AG04450 (cell line): ENCODE measurements at regions of chr2 and their contacts with region 1.

Region 1: GRCh38 chr2:25851740-25852503 is 26.4 kb downstream of the ASXL2 start:
- DNase-seq: peak; percentile 65
- H3K4me3 ChIP-seq: peak overlapping the region; percentile 13; the same call in 1 of the 2 replicates
- H3K27ac ChIP-seq: peak overlapping the region; percentile 70
- H3K27me3 ChIP-seq: no peaks in the 10 kb centered on the region
- CTCF ChIP-seq: peak; percentile 62

Region 2: DNA sequence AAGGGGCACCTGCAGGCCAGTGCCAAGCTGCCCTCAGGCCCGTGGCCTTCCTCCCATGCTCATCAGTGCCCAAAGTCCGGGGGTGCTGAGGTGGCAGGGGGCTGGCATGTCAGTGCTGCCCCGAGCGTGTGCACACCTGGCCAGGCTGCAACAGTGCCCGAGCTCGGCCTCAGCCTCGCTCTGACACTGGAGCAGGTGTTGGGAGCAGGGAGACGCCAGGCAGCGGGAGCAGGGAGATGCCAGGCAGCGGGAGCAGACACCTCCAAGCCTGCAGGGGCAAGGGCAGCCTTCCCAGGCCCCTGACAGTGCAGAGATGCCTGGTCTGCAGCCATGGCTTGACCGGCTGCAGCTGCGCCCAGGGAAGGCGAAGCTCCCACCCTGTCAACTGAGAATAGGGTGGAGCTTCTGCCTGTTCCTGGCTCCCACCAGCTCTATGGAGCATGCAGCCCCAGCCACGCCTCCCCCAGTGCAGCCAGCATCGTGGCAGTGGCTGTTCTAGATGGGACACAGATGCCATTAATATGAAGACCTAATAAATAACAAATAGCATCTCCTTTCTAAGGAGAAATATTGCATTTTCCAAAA is 260.9 kb before region 1 on chr2:
- CTCF ChIA-PET with region 1: no interaction called
- POLR2A ChIA-PET with region 1: no interaction called
- DNase-seq: no peak
- H3K4me3 ChIP-seq: no peak overlapping the region
- H3K27ac ChIP-seq: no peak overlapping the region
- H3K27me3 ChIP-seq: no peaks in the 10 kb centered on the region
- CTCF ChIP-seq: no peak

Region 3: GRCh38 chr2:25825238-25825637 is 26.7 kb before region 1 on chr2:
- CTCF ChIA-PET with region 1: interaction called, 17 read pairs
- POLR2A ChIA-PET with region 1: no interaction called
- DNase-seq: no peak
- H3K4me3 ChIP-seq: no peak overlapping the region
- H3K27ac ChIP-seq: no peak overlapping the region
- H3K27me3 ChIP-seq: no peaks in the 10 kb centered on the region
- CTCF ChIP-seq: no peak

Region 4: DNA sequence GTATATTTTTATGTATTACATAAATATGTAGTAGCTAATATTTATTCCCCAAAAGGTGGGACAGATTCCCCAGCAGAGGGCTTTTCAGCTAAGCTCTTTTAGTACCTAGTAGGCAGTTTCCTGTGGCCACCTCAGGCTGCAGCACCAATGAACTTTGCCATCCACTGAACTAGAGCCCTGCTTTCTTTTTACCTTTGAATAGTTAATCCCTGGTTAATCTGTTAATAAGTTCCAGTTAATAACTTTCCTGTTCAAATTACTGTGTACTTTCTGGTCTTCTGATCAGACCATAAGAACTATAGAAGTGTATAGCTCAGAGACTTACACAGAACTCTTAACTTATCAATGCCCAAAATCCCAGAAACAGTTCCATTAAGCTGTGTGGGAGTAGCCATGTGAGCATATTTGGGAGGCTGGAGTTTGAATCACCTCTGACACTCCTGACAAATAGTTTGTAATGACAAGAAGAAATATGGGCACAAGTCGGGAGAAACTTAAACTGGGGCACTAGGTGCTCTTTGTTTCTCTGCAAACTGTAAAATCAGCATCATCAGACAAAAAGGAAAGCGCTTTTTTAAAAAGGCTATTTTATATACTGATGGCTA is 13.7 kb before region 1 on chr2:
- CTCF ChIA-PET with region 1: interaction called, 21 read pairs
- POLR2A ChIA-PET with region 1: no interaction called
- DNase-seq: no peak
- H3K4me3 ChIP-seq: no peak overlapping the region
- H3K27ac ChIP-seq: no peak overlapping the region
- H3K27me3 ChIP-seq: no peaks in the 10 kb centered on the region
- CTCF ChIP-seq: no peak

Region 5: DNA sequence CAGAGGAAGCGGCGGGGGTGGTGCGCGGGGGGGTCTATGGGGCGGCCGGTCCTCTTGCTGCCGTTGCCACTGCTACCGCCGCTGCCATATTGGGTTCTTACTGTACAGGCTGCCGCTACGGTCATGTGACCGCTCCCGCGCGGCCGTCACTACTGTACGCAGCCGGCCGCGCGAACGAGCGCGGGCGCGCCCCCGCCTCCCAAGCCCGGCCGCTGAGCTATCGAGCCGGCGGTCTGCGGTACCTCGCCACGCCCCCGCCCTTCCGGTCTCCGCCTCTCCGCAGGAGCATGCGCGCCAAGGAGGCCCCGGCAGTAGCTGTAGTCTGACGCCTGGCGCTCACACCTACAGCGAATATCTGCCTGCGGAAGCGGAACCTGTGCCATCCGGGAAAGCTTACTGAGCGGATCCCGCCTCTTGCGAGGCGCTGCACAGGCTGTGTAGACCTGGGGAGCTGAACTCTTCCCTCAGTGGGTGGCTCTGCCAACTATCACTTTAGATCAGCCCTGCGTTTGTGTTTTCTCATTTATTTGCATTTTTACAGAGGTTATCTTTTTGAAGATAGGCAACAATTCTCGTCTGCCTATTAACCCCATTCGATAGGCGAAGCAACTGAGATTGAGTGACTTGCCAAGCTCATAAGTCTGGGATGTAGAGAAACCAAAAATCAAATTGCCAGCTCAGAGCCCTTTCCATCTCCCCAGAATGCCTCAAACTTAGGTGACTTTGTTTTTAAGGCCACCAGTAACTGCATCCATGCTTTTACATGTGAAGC is 26.6 kb after region 1 on chr2 and contains the start of gene ASXL2:
- CTCF ChIA-PET with region 1: interaction called, 19 read pairs
- POLR2A ChIA-PET with region 1: interaction called, 9 read pairs
- DNase-seq: peak; percentile 89
- H3K4me3 ChIP-seq: peak within 1 kb of the TSS; percentile 99
- H3K27ac ChIP-seq: peak within 1 kb of the TSS; percentile 94
- H3K27me3 ChIP-seq: no peaks in the 10 kb centered on the region
- CTCF ChIP-seq: no peak
- polyA plus RNA-seq, gene ASXL2: 12.5 and 14.0 TPM in 2 replicates

Region 6: DNA sequence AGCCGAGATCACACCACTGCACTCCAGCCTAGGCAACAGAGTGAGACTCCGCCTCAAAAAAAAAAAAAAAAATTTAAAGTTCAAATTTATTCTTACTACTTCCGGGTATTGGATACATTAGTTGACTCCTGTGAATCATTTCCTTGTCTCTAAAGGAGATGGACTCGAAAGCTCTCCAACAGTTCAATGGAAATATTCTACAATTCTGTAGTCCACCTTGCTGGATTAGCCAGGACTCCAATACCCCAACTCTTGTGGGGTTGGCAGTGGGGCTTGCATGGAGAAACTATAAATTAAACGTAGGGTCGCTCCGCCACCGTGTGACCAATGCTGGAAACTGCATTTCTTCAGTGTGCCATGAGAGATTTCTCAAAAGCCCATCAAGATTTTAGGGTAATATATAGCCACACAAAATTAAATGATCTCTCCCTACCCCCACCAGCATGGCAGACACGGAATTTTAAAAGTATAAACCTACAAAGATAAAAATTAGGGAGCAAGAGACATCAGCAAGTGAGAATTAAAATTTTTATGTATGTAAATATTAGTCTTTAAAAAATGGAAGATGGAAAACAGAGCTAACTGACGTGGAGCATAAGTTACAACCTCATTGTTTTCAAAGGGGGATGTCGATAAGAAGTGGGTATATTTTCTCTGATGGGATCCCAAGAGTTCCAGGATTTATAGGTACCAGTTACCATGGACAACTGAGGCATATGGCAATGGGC is 293.2 kb after region 1 on chr2:
- CTCF ChIA-PET with region 1: interaction called, 38 read pairs
- POLR2A ChIA-PET with region 1: no interaction called
- DNase-seq: peak; percentile 7
- H3K4me3 ChIP-seq: no peak overlapping the region
- H3K27ac ChIP-seq: no peak overlapping the region
- H3K27me3 ChIP-seq: no peaks in the 10 kb centered on the region
- CTCF ChIP-seq: peak; percentile 80